ENCODE measurements at regions of chr6 and their contacts with region 1.

Region 1: GRCh38 chr6:144104898-144105487 is 9.6 kb upstream of the SF3B5 start:
- DNase-seq: peak; percentile 29
- H3K4me3 ChIP-seq: no peak overlapping the region
- H3K27ac ChIP-seq: no peak overlapping the region
- H3K27me3 ChIP-seq: no peaks in the 10 kb centered on the region
- CTCF ChIP-seq: peak; percentile 73

Region 2: GRCh38 chr6:143928853-143929252 is 176.1 kb before region 1 on chr6:
- CTCF ChIA-PET with region 1: no interaction called
- POLR2A ChIA-PET with region 1: no interaction called
- DNase-seq: no peak
- H3K4me3 ChIP-seq: no peak overlapping the region
- H3K27ac ChIP-seq: no peak overlapping the region
- H3K27me3 ChIP-seq: peaks cover 2% of the 10 kb centered on the region
- CTCF ChIP-seq: no peak

Region 3: GRCh38 chr6:144013486-144013909 is 91.5 kb before region 1 on chr6:
- CTCF ChIA-PET with region 1: no interaction called
- POLR2A ChIA-PET with region 1: no interaction called
- DNase-seq: peak; percentile 43
- H3K4me3 ChIP-seq: no peak overlapping the region
- H3K27ac ChIP-seq: no peak overlapping the region
- H3K27me3 ChIP-seq: no peaks in the 10 kb centered on the region
- CTCF ChIP-seq: peak; percentile 95

Region 4: DNA sequence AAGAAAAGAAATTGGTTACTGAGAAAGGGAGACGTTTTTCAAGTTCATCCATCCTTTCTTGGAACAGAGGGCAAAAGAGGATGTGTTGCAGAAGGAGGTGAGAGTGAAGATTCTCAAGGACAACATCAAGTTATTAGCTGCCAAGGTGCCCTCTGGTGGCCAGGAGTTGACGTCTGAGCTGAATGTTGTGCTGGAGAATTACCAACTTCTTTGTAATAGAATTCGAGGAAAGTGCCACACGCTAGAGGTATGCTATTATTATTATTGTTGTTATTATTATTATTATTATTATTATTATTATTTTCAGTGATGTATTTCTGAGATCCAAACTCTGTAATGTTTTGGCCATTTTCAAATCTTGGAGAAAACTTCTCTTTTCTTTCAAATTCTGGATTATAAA is 377.1 kb after region 1 on chr6:
- CTCF ChIA-PET with region 1: interaction called, 15 read pairs
- POLR2A ChIA-PET with region 1: no interaction called
- DNase-seq: peak; percentile 63
- H3K4me3 ChIP-seq: no peak overlapping the region
- H3K27ac ChIP-seq: no peak overlapping the region
- H3K27me3 ChIP-seq: no peaks in the 10 kb centered on the region
- CTCF ChIP-seq: peak; percentile 69